ENCODE measurements at regions of chr2 and their contacts with region 1.

Region 1: GRCh38 chr2:200963124-200963917 is at the start of gene ORC2:
- DNase-seq: peak; percentile 95
- ATAC-seq: peak; percentile 95
- H3K4me3 Mint-ChIP-seq: peak within 1 kb of the TSS; percentile 92
- H3K27ac Mint-ChIP-seq: peak within 1 kb of the TSS; percentile 96
- H3K4me1 Mint-ChIP-seq: peaks cover 65% of the 10 kb centered on the region
- H3K27me3 Mint-ChIP-seq: no peaks in the 10 kb centered on the region
- total RNA-seq, gene ORC2: 68.5 to 80.5 TPM

Region 2: GRCh38 chr2:199955339-199956261 is 1007.7 kb before region 1 on chr2 and contains the starts of genes MAIP1 and TYW5:
- CTCF ChIA-PET with region 1: no interaction called
- POLR2A ChIA-PET with region 1: no interaction called
- intact Hi-C with region 1: loop called in 1 of 2 experiments (anchors 5 kb)
- DNase-seq: peak; percentile 87
- ATAC-seq: peak; percentile 87
- H3K4me3 Mint-ChIP-seq: peak within 1 kb of the TSS; percentile 99
- H3K27ac Mint-ChIP-seq: peak within 1 kb of the TSS; percentile 95
- H3K4me1 Mint-ChIP-seq: peaks cover 50% of the 10 kb centered on the region
- H3K27me3 Mint-ChIP-seq: no peaks in the 10 kb centered on the region
- total RNA-seq, gene MAIP1: 26.1 to 27.5 TPM
- total RNA-seq, gene TYW5: 9.6 to 10.1 TPM

Region 3: DNA sequence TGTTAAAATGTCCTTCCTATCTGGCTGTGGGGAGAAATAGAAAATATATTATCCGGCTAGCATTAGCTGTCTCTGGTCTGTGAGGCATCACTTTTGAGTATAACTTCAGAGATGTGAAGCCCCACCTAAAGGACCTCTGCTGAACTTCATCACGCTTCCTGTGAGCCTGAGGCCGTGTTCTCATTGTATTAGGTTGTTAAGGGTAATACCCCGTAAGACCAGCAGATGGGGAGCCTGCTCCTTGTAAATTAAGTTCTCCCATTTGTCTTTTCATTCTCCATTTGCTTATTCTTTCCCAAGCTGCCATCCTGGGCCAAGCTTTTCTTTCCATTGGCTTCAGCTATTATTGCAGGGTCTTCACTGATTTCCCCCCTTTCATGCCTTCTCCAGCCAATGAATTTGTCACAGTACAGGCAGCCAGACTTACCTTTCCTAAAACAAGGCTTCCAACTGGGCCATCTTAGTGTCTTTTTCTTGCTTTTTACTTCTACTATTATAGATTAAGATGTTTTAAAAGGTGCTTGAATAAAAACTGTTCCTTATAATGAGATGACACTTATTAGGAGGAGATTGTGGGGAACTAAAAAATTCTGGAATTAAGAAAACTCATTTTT is 61.8 kb before region 1 on chr2:
- CTCF ChIA-PET with region 1: interaction called, 3 read pairs
- POLR2A ChIA-PET with region 1: no interaction called
- intact Hi-C with region 1: loop called in 1 of 2 experiments (anchors 5 kb)
- DNase-seq: peak; percentile 83
- ATAC-seq: peak; percentile 100
- H3K4me3 Mint-ChIP-seq: no peak overlapping the region
- H3K27ac Mint-ChIP-seq: peak overlapping the region; percentile 73
- H3K4me1 Mint-ChIP-seq: peaks cover 2% of the 10 kb centered on the region
- H3K27me3 Mint-ChIP-seq: no peaks in the 10 kb centered on the region

Region 4: GRCh38 chr2:200975672-200976071 is 12.4 kb after region 1 on chr2:
- CTCF ChIA-PET with region 1: interaction called, 26 read pairs
- POLR2A ChIA-PET with region 1: no interaction called
- intact Hi-C with region 1: no loop called
- DNase-seq: no peak
- ATAC-seq: peak; percentile 75
- H3K4me3 Mint-ChIP-seq: no peak overlapping the region
- H3K27ac Mint-ChIP-seq: no peak overlapping the region
- H3K4me1 Mint-ChIP-seq: peaks cover 3% of the 10 kb centered on the region
- H3K27me3 Mint-ChIP-seq: no peaks in the 10 kb centered on the region

Region 5: GRCh38 chr2:201176081-201176481 is 212.8 kb after region 1 on chr2:
- CTCF ChIA-PET with region 1: interaction called, 10 read pairs
- POLR2A ChIA-PET with region 1: no interaction called
- intact Hi-C with region 1: loop called (anchors 2 to 5 kb)
- DNase-seq: no peak
- ATAC-seq: no peak
- H3K4me3 Mint-ChIP-seq: no peak overlapping the region
- H3K27ac Mint-ChIP-seq: no peak overlapping the region
- H3K4me1 Mint-ChIP-seq: peaks cover 10% of the 10 kb centered on the region
- H3K27me3 Mint-ChIP-seq: no peaks in the 10 kb centered on the region

Region 6: GRCh38 chr2:201451292-201452057 is 488.2 kb after region 1 on chr2 and contains the starts of genes STRADB and TRAK2:
- CTCF ChIA-PET with region 1: no interaction called
- POLR2A ChIA-PET with region 1: no interaction called
- intact Hi-C with region 1: loop called in 1 of 2 experiments (anchors 1 kb)
- DNase-seq: peak; percentile 98
- ATAC-seq: peak; percentile 91
- H3K4me3 Mint-ChIP-seq: peak within 1 kb of the TSS; percentile 95
- H3K27ac Mint-ChIP-seq: peak within 1 kb of the TSS; percentile 97
- H3K4me1 Mint-ChIP-seq: peaks cover 44% of the 10 kb centered on the region
- H3K27me3 Mint-ChIP-seq: no peaks in the 10 kb centered on the region
- total RNA-seq, gene STRADB: 20.5 to 21.8 TPM
- total RNA-seq, gene TRAK2: 22.5 to 25.6 TPM

Measured in activated CD4-positive, alpha-beta T cell treated with anti-CD3 and anti-CD28 coated beads for 36 hours (primary cell).